ENCODE measurements at regions of chr12 and their contacts with region 1.

Region 1: GRCh38 chr12:122471324-122472226 is 29.2 kb downstream of the ZCCHC8 start:
- DNase-seq: no peak
- H3K4me3 Mint-ChIP-seq: no peak overlapping the region
- H3K27ac Mint-ChIP-seq: no peak overlapping the region
- H3K4me1 Mint-ChIP-seq: peaks cover 23% of the 10 kb centered on the region
- H3K27me3 Mint-ChIP-seq: no peaks in the 10 kb centered on the region

Region 2: GRCh38 chr12:122363782-122364181 is 107.8 kb before region 1 on chr12:
- CTCF ChIA-PET with region 1: no interaction called
- POLR2A ChIA-PET with region 1: no interaction called
- DNase-seq: no peak
- H3K4me3 Mint-ChIP-seq: no peak overlapping the region
- H3K27ac Mint-ChIP-seq: no peak overlapping the region
- H3K4me1 Mint-ChIP-seq: peaks cover 8% of the 10 kb centered on the region
- H3K27me3 Mint-ChIP-seq: no peaks in the 10 kb centered on the region

Region 3: GRCh38 chr12:122406701-122407164 is 64.8 kb before region 1 on chr12:
- CTCF ChIA-PET with region 1: interaction called, 181 read pairs
- POLR2A ChIA-PET with region 1: interaction called, 7 read pairs
- DNase-seq: no peak
- H3K4me3 Mint-ChIP-seq: no peak overlapping the region
- H3K27ac Mint-ChIP-seq: no peak overlapping the region
- H3K4me1 Mint-ChIP-seq: peaks cover 34% of the 10 kb centered on the region
- H3K27me3 Mint-ChIP-seq: no peaks in the 10 kb centered on the region

Region 4: GRCh38 chr12:122421821-122422729 is 49.5 kb before region 1 on chr12 and contains the start of gene CLIP1:
- CTCF ChIA-PET with region 1: interaction called, 19 read pairs
- POLR2A ChIA-PET with region 1: interaction called, 6 read pairs
- DNase-seq: peak; percentile 68
- H3K4me3 Mint-ChIP-seq: peak within 1 kb of the TSS; percentile 91
- H3K27ac Mint-ChIP-seq: peak within 1 kb of the TSS; percentile 87
- H3K4me1 Mint-ChIP-seq: peaks cover 42% of the 10 kb centered on the region
- H3K27me3 Mint-ChIP-seq: peaks cover 2% of the 10 kb centered on the region
- total RNA-seq, gene CLIP1: 65.3 to 73.4 TPM

Measured in activated CD4-positive, alpha-beta memory T cell treated with anti-CD3 and anti-CD28 coated beads, Interleukin-2, amount 10 ng/mL, durations not matched to agents 7 days and 5 days (primary cell).